H1 (cell line): ENCODE measurements at regions of chr9 and their contacts with region 1.

Region 1: GRCh38 chr9:132447346-132447745 is 37.3 kb downstream of the CFAP77 start:
- DNase-seq: peak; percentile 5 to 71
- H3K4me3 ChIP-seq: no peak overlapping the region
- H3K27ac ChIP-seq: no peak overlapping the region
- H3K4me1 ChIP-seq: peaks cover 0 to 2% (median 0%) of the 10 kb centered on the region in 4 experiments; a peak in 1 of 7 replicates
- H3K27me3 ChIP-seq: peaks cover 0 to 2% (median 0%) of the 10 kb centered on the region in 4 experiments; a peak in 1 of 7 replicates
- CTCF ChIP-seq: peak; percentile 62 to 90 (median 87)
- EP300 ChIP-seq: no peak
- POLR2A ChIP-seq: no peak
- RAD21 ChIP-seq: peak; percentile 35 to 42; a peak in 3 of 4 replicates

Region 2: GRCh38 chr9:132381966-132382541 is 65.3 kb before region 1 on chr9:
- CTCF ChIA-PET with region 1: no interaction called
- POLR2A ChIA-PET with region 1: no interaction called
- DNase-seq: no peak
- H3K4me3 ChIP-seq: no peak overlapping the region
- H3K27ac ChIP-seq: no peak overlapping the region
- H3K4me1 ChIP-seq: no peaks in the 10 kb centered on the region
- H3K27me3 ChIP-seq: no peaks in the 10 kb centered on the region
- CTCF ChIP-seq: no peak
- EP300 ChIP-seq: no peak
- POLR2A ChIP-seq: no peak
- RAD21 ChIP-seq: no peak

Region 3: GRCh38 chr9:132422574-132422973 is 24.8 kb before region 1 on chr9:
- CTCF ChIA-PET with region 1: interaction called, 11 read pairs
- POLR2A ChIA-PET with region 1: no interaction called
- DNase-seq: no peak
- H3K4me3 ChIP-seq: no peak overlapping the region
- H3K27ac ChIP-seq: no peak overlapping the region
- H3K4me1 ChIP-seq: peaks cover 4 to 16% (median 13%) of the 10 kb centered on the region in 4 experiments; a peak in 6 of 7 replicates
- H3K27me3 ChIP-seq: peaks cover 0 to 10% (median 2%) of the 10 kb centered on the region in 4 experiments; a peak in 5 of 7 replicates
- CTCF ChIP-seq: no peak
- EP300 ChIP-seq: no peak
- POLR2A ChIP-seq: no peak
- RAD21 ChIP-seq: no peak

Region 4: GRCh38 chr9:132457504-132458236 is 10.3 kb after region 1 on chr9:
- CTCF ChIA-PET with region 1: interaction called, 39 read pairs
- POLR2A ChIA-PET with region 1: interaction called, 3 read pairs
- DNase-seq: no peak
- H3K4me3 ChIP-seq: no peak overlapping the region
- H3K27ac ChIP-seq: no peak overlapping the region
- H3K4me1 ChIP-seq: no peaks in the 10 kb centered on the region; a peak in 2 of 7 replicates
- H3K27me3 ChIP-seq: no peaks in the 10 kb centered on the region
- CTCF ChIP-seq: no peak
- EP300 ChIP-seq: no peak
- POLR2A ChIP-seq: no peak
- RAD21 ChIP-seq: no peak